Mammary epithelial cell (primary cell): ENCODE measurements at regions of chr15 and their contacts with region 1.

Region 1: GRCh38 chr15:65829130-65829770 is 37.2 kb upstream of the DENND4A start:
- DNase-seq: peak; percentile 36
- H3K4me3 ChIP-seq: no peak overlapping the region
- H3K27ac ChIP-seq: no peak overlapping the region
- H3K4me1 ChIP-seq: peaks cover 8% of the 10 kb centered on the region
- H3K27me3 ChIP-seq: no peaks in the 10 kb centered on the region
- CTCF ChIP-seq: peak; percentile 53 to 57

Region 2: DNA sequence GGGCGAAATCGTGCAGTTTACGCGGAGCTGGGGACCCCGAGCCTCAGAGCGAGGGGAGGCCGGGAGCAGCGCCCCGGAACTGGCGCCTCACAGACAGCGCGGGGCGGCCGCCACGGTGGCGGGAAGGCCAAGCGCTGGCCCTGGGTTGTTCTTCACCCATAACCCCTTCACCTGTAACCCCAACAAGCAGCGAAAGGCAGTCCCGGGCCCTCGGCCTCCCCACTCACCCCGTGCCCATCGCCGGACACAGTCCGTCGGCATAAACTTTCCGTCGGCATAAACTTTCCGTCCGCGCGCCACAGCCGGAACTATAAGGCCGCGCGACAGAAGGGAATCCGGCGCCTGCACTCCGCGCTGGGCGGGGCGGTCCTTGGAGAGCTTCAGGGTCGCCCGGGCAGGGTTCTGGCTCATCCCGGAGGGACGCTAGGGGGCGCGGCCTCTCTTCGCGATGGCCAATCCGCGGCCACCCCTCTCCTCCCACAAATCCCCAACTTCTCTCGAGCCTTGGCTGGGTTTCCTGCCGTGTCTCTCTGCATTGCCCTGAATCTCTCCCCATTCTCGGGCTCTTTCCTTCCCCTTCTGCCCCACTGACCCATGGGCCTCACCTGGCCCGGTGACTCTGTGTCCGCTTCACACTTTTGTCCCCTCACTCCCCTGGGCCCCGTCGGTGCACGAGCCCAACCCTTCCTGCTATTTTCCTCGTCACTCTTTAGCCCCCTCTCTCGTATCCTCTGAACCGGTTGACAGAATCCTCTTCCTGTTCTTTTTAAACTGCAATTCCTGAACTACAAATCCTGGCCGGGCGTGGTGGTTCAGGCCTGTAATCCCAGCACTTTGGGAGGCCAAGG is 218.2 kb before region 1 on chr15 and contains the start of gene INTS14:
- CTCF ChIA-PET with region 1: no interaction called
- dilution Hi-C with region 1: no loop called
- in situ Hi-C with region 1: no loop called
- intact Hi-C with region 1: loop called (anchors 1 kb)
- DNase-seq: peak; percentile 95
- H3K4me3 ChIP-seq: peak within 1 kb of the TSS; percentile 67 to 85 (median 80)
- H3K27ac ChIP-seq: peak within 1 kb of the TSS; percentile 78
- H3K4me1 ChIP-seq: peaks cover 22% of the 10 kb centered on the region
- H3K27me3 ChIP-seq: no peaks in the 10 kb centered on the region
- CTCF ChIP-seq: peak in 1 of 2 donors; percentile 55
- total RNA-seq, gene INTS14: 38.9 to 41.8 TPM

Region 3: GRCh38 chr15:65638681-65639089 is 190.6 kb before region 1 on chr15:
- CTCF ChIA-PET with region 1: no interaction called
- dilution Hi-C with region 1: no loop called
- in situ Hi-C with region 1: loop called in 1 of 2 experiments (anchors 10 kb)
- intact Hi-C with region 1: loop called (anchors 1 kb)
- DNase-seq: peak; percentile 71
- H3K4me3 ChIP-seq: no peak overlapping the region
- H3K27ac ChIP-seq: no peak overlapping the region
- H3K4me1 ChIP-seq: no peaks in the 10 kb centered on the region
- H3K27me3 ChIP-seq: no peaks in the 10 kb centered on the region
- CTCF ChIP-seq: peak; percentile 79 to 84

Region 4: DNA sequence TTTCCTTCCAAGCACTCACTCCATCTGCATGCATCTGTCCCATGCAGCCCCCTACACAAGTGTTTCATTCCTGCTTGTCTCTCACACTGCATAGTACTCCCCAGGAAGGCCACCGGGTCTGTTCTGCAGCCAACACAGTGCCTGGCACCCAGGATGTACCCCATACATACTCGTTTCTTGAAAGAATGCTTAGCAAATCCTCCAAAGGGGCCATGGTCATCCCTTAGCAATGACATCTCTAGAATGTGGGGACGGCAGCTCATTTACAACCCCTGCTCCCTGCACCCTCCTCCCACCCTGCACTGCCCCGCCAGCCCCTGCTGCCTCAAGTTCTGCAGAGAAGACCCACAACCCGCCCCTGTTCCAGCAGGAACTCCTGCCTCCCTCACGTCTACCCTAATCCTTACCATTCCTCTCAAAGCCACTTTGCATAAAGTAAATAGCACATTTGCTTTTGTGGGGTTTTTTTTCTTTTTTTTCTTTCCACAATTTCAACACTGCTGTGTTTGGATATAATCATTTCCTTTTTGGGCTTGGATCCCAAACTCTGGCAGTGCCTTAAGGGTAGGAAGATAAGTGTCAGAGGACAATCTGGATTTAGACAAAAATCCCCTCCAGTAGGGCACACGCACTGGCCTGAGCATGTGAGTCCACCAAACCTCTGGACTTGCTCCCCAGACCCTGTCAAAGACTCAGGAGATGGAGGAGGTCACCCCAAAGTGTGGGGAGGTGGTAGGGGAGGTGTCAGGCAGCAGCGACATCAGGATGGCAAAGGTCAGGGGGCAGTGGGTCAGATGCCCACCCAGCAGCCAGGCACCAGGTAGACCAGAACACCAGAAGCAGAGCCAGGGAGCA is 355.9 kb after region 1 on chr15:
- CTCF ChIA-PET with region 1: no interaction called
- dilution Hi-C with region 1: no loop called
- in situ Hi-C with region 1: no loop called
- intact Hi-C with region 1: no loop called
- DNase-seq: no peak
- H3K4me3 ChIP-seq: no peak overlapping the region
- H3K27ac ChIP-seq: no peak overlapping the region
- H3K4me1 ChIP-seq: peaks cover 16% of the 10 kb centered on the region
- H3K27me3 ChIP-seq: no peaks in the 10 kb centered on the region
- CTCF ChIP-seq: no peak